ENCODE measurements at regions of chr22 and their contacts with region 1.

Region 1: GRCh38 chr22:20013382-20013871 is 3.2 kb downstream of the ARVCF start:
- DNase-seq: peak; percentile 66
- ATAC-seq: no peak
- H3K4me3 Mint-ChIP-seq: no peak overlapping the region
- H3K27ac Mint-ChIP-seq: no peak overlapping the region
- H3K4me1 Mint-ChIP-seq: peaks cover 14% of the 10 kb centered on the region
- H3K27me3 Mint-ChIP-seq: peaks cover 32% of the 10 kb centered on the region

Region 2: DNA sequence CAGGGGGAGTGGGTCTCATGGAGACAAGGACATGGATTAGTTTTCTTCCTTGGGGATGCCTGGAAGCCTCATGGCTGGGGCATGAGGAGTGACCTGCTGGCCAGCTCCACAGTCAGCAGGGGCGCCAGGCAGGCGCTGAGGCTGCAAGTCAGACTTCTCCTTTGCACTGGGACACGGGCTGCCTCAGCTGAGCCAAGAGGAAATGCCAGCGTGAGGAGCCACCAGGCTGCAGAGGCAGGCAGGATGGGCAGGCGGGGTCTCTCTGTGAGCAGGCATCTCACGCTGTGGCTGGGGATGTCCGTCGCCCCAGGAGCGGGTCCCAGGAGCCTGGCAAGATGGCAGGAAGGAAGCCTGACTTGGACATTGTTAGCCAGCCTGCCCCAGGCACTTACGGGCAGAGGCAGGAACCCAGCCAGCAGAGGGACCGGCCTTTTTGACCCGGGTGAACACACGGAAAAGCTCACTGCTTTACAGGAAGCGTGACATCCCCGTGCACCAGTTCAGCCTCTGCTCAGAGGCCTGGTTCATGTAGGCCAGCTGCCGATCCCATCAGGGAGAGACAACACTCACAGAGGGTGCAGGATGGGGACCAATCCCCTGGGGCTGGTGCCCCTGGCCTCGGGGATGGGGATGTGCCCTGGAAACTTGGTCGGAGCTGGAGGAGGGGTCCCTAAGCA is 168.9 kb before region 1 on chr22:
- CTCF ChIA-PET with region 1: no interaction called
- DNase-seq: peak; percentile 38
- ATAC-seq: peak; percentile 35
- H3K4me3 Mint-ChIP-seq: no peak overlapping the region
- H3K27ac Mint-ChIP-seq: no peak overlapping the region
- H3K4me1 Mint-ChIP-seq: peaks cover 3% of the 10 kb centered on the region
- H3K27me3 Mint-ChIP-seq: no peaks in the 10 kb centered on the region

Region 3: DNA sequence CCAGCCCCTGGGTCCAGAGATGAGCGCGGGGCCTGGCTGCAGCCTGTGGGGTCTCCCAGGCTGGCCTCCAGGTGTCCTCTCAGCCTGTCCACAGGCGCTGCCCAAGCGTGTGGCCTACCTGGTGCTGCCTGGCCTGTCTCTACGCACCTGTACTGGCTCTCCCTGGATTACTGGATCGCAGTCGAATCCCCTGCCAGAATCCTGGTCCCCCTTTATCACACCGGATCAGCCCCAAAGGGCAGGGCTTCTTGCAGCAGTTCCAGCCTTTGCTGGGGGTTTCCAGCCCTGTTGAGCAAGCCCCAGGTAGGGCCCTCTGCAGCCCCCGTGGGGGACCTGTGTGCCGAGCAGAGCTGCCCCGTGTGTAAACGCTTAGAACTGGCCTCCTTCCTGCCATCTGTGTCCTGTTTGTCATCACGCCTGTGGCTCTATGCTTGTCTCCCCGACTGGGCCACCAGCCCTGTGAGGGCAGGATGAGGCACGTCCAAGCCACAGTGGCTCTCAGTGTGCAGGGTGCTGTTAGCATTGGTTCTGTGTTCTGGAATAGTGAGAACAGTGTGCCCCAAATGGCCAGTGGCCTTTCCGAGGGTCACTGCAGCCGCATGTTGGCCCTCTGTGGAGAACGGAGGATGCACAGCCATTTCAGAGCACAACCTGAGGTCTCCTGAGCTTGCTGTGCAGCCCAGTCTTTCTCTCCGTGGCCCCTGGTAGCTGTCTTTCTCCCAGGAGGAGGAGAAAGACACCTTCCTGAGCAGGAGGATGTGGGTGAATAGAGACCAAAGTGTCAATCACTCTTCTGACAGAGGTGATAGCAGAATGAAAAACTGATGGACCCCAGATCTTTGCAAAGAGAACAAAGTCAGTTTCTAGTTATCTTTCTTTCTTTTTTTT is 57.9 kb before region 1 on chr22:
- CTCF ChIA-PET with region 1: interaction called, 14 read pairs
- DNase-seq: peak; percentile 77
- ATAC-seq: peak; percentile 80
- H3K4me3 Mint-ChIP-seq: peak overlapping the region; percentile 51
- H3K27ac Mint-ChIP-seq: peak overlapping the region; percentile 96
- H3K4me1 Mint-ChIP-seq: peaks cover 40% of the 10 kb centered on the region
- H3K27me3 Mint-ChIP-seq: no peaks in the 10 kb centered on the region

Region 4: GRCh38 chr22:19984201-19984753 is 29.1 kb before region 1 on chr22:
- CTCF ChIA-PET with region 1: interaction called, 10 read pairs
- DNase-seq: no peak
- ATAC-seq: no peak
- H3K4me3 Mint-ChIP-seq: no peak overlapping the region
- H3K27ac Mint-ChIP-seq: no peak overlapping the region
- H3K4me1 Mint-ChIP-seq: no peaks in the 10 kb centered on the region
- H3K27me3 Mint-ChIP-seq: no peaks in the 10 kb centered on the region

Region 5: DNA sequence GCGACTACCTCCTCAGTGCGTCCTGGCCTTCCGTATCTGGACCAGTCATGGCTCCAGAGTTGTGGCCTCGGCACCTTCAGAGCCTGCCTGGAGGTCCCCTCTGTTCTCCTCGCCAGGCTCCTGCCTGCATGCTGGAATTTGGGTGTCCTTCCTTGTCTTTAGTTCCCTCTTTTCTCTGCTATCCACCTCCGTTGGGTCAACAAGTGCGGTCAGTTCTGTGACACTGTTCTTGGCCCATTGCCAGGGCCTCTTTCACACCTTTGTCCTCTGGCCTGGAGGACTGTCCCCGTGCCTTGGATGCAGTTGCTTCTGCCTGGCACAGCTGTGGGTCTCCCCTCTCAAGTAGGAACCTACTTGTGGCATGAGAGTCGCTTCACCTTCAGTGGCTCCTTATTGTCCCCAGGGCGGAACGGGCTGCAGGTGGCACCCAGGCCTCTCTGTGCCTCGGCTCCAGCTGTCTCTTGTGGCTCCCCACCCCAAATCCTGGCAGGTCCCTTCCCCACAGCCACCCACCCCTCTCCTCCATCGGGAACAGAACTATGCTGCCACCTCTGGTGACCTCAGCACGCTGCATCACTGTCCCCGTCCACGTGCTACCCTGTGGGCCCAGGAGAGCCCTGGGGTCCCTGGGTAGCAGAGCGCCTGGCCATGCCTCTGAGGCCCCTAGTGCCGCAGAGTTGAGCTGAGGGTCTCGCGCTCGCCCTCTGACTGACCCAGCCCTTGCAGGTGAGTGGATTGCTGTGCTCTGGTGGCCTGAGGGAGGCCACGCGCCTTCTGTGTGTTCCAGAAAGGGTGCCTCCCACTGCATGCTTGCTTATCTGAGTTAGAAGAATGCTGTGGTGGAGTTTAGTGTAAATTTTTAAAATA is 71.4 kb after region 1 on chr22:
- CTCF ChIA-PET with region 1: no interaction called
- DNase-seq: no peak
- ATAC-seq: no peak
- H3K4me3 Mint-ChIP-seq: no peak overlapping the region
- H3K27ac Mint-ChIP-seq: no peak overlapping the region
- H3K4me1 Mint-ChIP-seq: peaks cover 70% of the 10 kb centered on the region
- H3K27me3 Mint-ChIP-seq: no peaks in the 10 kb centered on the region

Region 6: GRCh38 chr22:20130739-20131596 is 117.5 kb after region 1 on chr22:
- CTCF ChIA-PET with region 1: interaction called, 13 read pairs
- DNase-seq: peak; percentile 76
- ATAC-seq: peak; percentile 68
- H3K4me3 Mint-ChIP-seq: no peak overlapping the region
- H3K27ac Mint-ChIP-seq: no peak overlapping the region
- H3K4me1 Mint-ChIP-seq: peaks cover 21% of the 10 kb centered on the region
- H3K27me3 Mint-ChIP-seq: no peaks in the 10 kb centered on the region

Region 7: DNA sequence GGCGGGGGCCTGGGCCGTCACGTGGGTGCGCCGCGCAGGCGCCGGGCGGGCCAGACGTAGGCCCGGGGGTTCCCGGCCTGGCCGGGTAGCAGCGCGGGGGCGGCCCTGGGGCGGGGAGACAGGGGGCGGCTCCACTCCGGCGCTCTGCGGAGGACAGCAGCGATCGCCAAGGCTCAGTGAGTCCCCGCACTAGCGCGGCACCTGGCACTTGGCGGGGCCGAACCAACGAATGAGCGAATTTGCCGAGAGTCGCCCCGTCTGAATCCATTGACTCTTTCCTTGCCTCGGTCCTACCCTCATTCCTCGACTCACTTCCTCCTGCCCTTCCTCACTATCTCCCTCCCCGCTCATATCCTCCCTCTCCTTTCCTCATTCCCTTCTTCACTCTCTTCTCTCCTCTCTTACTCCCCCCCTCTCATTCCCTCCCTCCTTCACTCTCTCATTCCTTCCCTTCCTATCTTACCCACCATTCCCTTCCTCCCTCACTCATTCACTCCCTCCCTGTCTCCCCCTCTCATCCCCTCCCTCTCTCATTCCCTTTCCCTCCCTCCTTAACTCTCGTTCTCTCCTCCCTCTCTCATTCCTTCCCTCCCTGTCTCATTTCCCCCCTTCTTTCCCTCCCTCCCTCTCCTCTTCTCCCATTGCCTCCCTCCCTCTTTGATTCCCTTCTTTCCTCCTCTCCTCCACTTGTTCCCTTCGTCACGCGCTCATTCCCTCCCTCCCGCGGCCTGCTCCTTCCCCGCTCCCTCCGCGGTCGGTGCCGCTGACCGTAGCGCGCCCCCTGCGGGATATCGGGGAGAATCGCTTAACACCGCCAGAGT is 482.6 kb after region 1 on chr22:
- CTCF ChIA-PET with region 1: no interaction called
- DNase-seq: peak; percentile 94
- ATAC-seq: peak; percentile 97
- H3K4me3 Mint-ChIP-seq: peak overlapping the region; percentile 85
- H3K27ac Mint-ChIP-seq: peak overlapping the region; percentile 74
- H3K4me1 Mint-ChIP-seq: peaks cover 25% of the 10 kb centered on the region
- H3K27me3 Mint-ChIP-seq: no peaks in the 10 kb centered on the region